Aorta (tissue), 5 donors: ENCODE measurements at regions of chr1 and their contacts with region 1.

Region 1: GRCh38 chr1:904310-904950 is 19.3 kb upstream of the SAMD11 start:
- DNase-seq: peak; percentile 85 to 95
- ATAC-seq: peak; percentile 92
- H3K4me3 ChIP-seq: peak overlapping the region in 1 of 2 donors; percentile 1
- H3K27ac ChIP-seq: no peak overlapping the region
- H3K4me1 ChIP-seq: no peaks in the 10 kb centered on the region
- H3K27me3 ChIP-seq: no peaks in the 10 kb centered on the region

Region 2: GRCh38 chr1:861714-862113 is 42.7 kb before region 1 on chr1:
- intact Hi-C with region 1: no loop called
- DNase-seq: no peak
- ATAC-seq: no peak
- H3K4me3 ChIP-seq: no peak overlapping the region
- H3K27ac ChIP-seq: no peak overlapping the region
- H3K4me1 ChIP-seq: no peaks in the 10 kb centered on the region
- H3K27me3 ChIP-seq: no peaks in the 10 kb centered on the region

Region 3: DNA sequence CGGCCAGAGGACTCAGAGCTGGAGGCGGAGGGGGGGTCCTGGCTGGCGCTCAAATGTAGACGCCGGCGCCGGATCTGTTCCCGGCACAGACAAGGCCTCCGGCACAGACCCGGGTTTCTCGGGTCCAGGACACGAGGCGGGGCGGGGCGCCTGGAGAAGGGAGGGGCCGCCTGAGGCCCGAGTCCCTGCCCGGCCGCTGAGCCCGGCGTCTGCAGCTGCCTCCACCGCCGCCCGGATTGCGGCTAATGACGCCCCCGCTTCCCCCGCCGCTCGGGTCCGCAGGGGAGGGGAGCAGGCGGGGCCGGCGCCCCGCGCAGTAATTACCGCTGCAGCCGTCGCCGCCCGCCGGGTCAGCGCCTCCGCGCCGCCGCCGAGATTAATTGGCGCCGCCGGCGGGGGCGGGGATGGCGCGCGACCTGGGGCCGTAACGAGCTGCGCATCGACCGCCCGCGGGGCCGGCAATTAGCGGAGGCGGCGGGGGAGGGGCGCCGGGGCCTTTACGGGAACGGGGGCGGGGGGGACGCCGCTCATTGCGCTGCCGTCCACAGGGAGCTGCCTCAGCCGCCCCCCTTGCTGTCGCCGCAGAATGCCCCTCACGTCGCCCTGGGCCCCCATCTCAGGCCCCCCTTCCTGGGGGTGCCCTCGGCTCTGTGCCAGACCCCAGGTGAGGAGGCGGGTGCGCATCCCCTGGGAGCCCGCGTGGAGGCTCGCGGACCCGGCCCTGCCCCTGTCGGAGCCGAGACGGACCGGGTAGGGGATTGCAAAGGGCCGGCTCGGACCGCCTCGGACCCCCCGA is 37.4 kb after region 1 on chr1:
- intact Hi-C with region 1: loop called in 1 of 2 experiments (anchors 5 kb)
- DNase-seq: peak; percentile 90 to 94
- ATAC-seq: peak; percentile 79
- H3K4me3 ChIP-seq: peak overlapping the region in 1 of 2 donors; percentile 12
- H3K27ac ChIP-seq: no peak overlapping the region
- H3K4me1 ChIP-seq: no peaks in the 10 kb centered on the region
- H3K27me3 ChIP-seq: no peaks in the 10 kb centered on the region

Region 4: GRCh38 chr1:958823-959729 is 54.6 kb after region 1 on chr1 and contains the start of gene NOC2L:
- intact Hi-C with region 1: loop called (anchors 5 to 10 kb)
- DNase-seq: peak; percentile 95 to 99
- ATAC-seq: peak; percentile 96
- H3K4me3 ChIP-seq: peak within 1 kb of the TSS; percentile 86 to 90
- H3K27ac ChIP-seq: no peak within 1 kb of the TSS
- H3K4me1 ChIP-seq: no peaks in the 10 kb centered on the region
- H3K27me3 ChIP-seq: no peaks in the 10 kb centered on the region
- total RNA-seq, gene NOC2L: 35.8 to 41.4 TPM

Region 5: DNA sequence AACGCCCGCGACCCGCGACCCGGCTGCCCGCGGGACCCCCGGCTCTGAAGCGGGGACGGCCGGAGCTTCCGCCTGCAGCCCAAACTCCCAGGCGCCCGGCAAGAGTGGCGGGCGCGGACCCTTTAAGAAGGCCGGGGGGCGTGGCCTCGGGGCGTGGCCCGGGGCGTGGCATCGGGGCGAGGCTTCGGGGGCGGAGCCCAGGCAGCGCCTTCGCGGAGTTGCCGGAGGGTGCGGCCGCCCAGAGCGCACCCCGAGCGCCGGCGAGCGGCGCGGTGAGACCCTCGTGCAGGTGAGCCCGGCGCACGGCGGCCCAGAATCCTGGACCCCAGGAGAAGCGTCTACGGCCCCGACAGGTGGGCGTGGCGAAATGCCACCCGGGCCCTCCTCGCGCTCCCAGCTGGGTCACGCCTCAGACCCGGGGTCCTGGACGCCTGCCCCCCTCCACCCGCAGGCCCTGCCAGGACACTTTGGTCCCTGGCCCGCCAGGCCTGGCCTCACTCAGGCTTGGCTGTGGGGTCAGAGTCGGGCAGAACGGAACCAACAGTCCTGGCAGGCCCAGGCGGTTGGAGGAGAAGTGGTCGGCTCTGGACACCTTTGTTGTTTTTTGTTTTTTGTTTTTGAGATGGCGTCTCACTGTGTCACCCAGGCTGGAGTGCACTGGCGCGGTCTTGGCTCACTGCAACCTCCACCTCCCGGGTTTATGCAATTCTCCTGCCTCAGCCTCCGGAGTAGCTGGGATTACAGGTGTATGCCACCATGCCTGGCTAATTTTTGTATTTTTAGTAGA is 155.3 kb after region 1 on chr1:
- intact Hi-C with region 1: loop called in 1 of 2 experiments (anchors 10 kb)
- DNase-seq: peak; percentile 90 to 95
- ATAC-seq: peak; percentile 76
- H3K4me3 ChIP-seq: peak overlapping the region; percentile 28 to 52
- H3K27ac ChIP-seq: no peak overlapping the region
- H3K4me1 ChIP-seq: no peaks in the 10 kb centered on the region
- H3K27me3 ChIP-seq: no peaks in the 10 kb centered on the region

Region 6: DNA sequence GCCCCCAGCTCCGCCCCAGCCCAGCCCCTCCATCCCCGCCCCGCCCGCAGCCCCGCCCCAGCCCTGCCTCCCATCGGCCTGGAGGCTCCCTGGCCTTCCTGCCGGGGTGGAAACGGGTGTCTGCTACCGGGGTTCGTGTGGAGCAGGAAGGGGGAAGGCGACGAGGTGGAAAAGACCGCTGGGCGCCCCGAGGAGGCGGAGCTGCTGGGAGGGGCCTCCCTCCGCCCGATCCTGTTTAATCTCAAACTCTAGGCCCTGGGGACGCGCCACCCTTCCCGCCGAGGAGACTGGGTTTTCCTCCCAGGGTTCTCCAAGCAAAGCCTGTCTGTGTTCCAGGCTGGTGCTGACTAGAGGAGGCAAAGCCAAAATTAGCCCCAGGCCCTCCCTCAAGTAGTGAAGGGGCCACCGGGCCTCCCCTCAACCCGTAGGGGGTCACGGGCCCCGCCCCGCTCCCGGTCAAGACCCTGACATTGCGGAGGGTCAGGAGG is 253.0 kb after region 1 on chr1:
- intact Hi-C with region 1: no loop called
- DNase-seq: peak; percentile 90 to 94
- ATAC-seq: peak; percentile 90
- H3K4me3 ChIP-seq: peak overlapping the region; percentile 35 to 91
- H3K27ac ChIP-seq: peak overlapping the region in 1 of 2 donors; percentile 78
- H3K4me1 ChIP-seq: no peaks in the 10 kb centered on the region
- H3K27me3 ChIP-seq: no peaks in the 10 kb centered on the region

Region 7: GRCh38 chr1:1185101-1185765 is 280.8 kb after region 1 on chr1:
- intact Hi-C with region 1: no loop called
- DNase-seq: peak; percentile 42 to 71
- ATAC-seq: no peak
- H3K4me3 ChIP-seq: no peak overlapping the region
- H3K27ac ChIP-seq: no peak overlapping the region
- H3K4me1 ChIP-seq: no peaks in the 10 kb centered on the region
- H3K27me3 ChIP-seq: no peaks in the 10 kb centered on the region

Region 8: DNA sequence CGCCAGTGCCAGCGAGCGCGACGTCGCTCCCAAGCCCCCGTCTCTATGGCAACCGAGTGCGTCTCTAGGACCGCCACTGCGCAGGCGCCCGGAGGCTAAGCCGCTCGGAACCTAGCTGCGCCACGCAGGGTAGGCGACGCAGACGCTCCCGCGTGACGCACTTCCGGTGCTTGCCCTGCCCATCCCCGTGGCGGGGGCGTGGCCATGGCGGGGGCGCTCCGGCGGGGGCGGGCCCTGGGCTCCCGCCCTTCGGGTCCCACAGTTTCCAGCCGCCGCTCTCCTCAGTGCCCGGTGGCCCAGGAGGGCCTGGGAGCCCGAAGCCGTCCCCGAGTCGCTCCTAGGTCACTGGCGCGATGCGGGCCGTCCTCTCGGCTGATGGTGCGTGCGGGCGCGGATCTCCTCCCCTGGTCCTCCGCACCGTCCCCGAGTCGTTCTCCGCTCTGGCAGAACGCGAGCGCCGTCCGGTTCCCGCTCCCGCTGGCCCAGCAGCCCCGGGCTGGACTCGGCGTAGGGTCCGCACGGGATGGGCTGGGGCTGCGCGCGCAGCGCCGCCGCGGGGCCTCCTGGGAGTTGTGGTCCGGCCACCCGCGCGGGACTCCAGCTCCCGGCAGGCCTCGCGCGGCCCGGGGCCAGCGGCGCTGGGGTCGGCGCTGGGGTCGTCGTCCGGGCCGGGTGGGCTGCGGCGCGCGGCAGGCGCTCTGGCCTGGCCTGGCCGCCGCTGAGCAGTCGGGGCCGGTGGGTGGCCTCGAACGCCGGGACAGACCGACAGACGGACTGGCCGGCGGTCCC is 711.0 kb after region 1 on chr1 and contains the start of gene MIB2:
- intact Hi-C with region 1: no loop called
- DNase-seq: peak; percentile 97 to 99
- ATAC-seq: peak; percentile 98
- H3K4me3 ChIP-seq: peak within 1 kb of the TSS; percentile 65 to 83
- H3K27ac ChIP-seq: peak within 1 kb of the TSS; percentile 71 to 92
- H3K4me1 ChIP-seq: no peaks in the 10 kb centered on the region
- H3K27me3 ChIP-seq: no peaks in the 10 kb centered on the region
- total RNA-seq, gene MIB2: 45.0 to 77.7 TPM